Common myeloid progenitor, CD34-positive (primary cell): ENCODE measurements at regions of chr1 and their contacts with region 1.

Region 1: DNA sequence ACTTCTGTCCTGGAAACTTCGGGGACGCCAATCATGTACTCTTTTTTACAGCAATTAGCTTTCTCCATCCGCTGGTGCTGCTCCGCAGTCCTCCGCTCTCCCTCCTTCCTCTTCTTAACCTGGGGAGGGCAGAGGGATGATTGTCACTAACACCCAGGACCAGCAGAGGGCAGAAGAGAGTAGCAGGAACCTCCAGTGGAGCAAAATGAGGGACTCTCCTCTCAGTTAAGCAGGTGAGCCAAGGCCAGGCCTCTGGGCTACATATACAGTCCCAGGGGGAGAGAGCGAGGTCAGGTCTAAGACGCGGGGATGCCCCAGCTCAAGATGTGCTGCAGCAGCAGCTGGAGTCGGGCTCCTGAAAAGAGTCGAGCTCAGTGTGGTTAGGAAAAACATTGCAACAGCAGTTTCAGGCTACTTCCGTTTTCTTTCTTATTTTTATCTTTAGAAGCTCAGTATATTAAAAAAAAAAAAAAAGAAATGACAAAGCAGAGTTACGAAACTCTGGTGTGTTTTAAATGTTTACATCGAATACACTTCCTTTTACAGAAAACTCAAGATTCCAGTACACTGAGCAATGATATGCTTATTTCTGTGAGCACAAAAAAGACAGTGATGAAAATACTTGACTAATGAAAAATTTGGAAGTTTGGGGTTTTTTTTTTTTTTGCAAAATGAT is 25.7 kb upstream of the NLRP3 start:
- DNase-seq: peak; percentile 97 to 100 (median 99)
- H3K4me3 ChIP-seq: peak overlapping the region in 6 of 7 experiments; percentile 1 to 64 (median 34)
- H3K27ac ChIP-seq: peak overlapping the region; percentile 50 to 77
- H3K4me1 ChIP-seq: peaks cover 8 to 49% (median 43%) of the 10 kb centered on the region in 4 experiments
- H3K27me3 ChIP-seq: no peaks in the 10 kb centered on the region

Region 2: GRCh38 chr1:247360991-247361731 is 29.1 kb before region 1 on chr1:
- CTCF ChIA-PET with region 1: no interaction called
- POLR2A ChIA-PET with region 1: no interaction called
- DNase-seq: peak in 2 of 3 donors; percentile 10 to 42
- H3K4me3 ChIP-seq: peak overlapping the region in 1 of 7 experiments; percentile 36
- H3K27ac ChIP-seq: no peak overlapping the region
- H3K4me1 ChIP-seq: peaks cover 3 to 11% (median 6%) of the 10 kb centered on the region in 4 experiments
- H3K27me3 ChIP-seq: no peaks in the 10 kb centered on the region

Region 3: GRCh38 chr1:247401310-247402119 is 11.3 kb after region 1 on chr1:
- CTCF ChIA-PET with region 1: interaction called, 10 read pairs
- POLR2A ChIA-PET with region 1: no interaction called
- DNase-seq: no peak
- H3K4me3 ChIP-seq: no peak overlapping the region
- H3K27ac ChIP-seq: no peak overlapping the region
- H3K4me1 ChIP-seq: peaks cover 0 to 7% (median 5%) of the 10 kb centered on the region in 4 experiments
- H3K27me3 ChIP-seq: no peaks in the 10 kb centered on the region

Region 4: DNA sequence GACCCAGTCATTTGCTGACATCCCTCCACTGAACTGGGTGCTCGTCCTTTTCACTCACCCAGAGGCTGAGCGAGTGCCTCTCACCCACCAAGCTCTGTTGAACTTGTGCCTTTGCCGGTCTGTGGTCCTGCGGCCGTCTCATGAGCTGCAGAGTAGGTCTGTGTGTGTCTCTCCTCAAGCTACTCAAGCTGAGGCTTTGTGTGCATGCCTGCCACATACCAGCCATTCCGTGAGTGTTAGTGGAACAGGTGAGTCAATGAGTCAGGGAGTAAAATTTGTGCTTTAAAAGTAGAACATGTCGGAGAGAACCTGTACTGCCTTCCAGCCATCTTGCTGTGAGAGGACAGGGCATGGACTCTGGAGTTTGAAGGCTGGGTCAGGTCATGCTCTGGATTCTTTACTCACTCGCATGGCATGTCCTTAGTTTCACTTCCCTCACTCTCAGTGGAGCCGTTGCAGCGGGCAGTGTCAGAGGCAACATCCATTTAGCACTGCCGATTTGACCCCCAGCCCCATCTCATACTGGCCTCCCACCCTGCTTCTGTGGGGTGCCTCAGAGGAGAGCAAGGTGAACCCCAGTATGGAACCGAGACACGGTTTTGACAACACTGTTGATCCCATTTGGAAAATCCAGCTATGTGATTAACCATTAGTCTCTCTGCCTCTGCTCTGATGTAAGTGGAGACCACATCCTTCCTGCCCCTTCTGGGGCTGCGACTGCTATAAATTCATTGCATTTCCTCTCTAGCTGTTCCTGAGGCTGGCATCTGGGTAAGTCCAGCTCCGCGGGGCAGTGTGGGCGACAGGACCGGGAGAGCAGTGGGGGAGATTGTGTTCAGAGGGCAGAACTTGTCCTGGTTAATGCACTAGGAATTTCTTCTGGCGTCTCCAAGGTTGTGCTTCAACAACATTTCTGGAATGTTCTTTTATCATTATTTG is 25.4 kb after region 1 on chr1 and contains the start of gene NLRP3:
- CTCF ChIA-PET with region 1: interaction called, 47 read pairs
- POLR2A ChIA-PET with region 1: interaction called, 21 read pairs
- DNase-seq: peak; percentile 85 to 93 (median 90)
- H3K4me3 ChIP-seq: peak within 1 kb of the TSS; percentile 55 to 92 (median 78)
- H3K27ac ChIP-seq: peak within 1 kb of the TSS; percentile 71 to 73
- H3K4me1 ChIP-seq: peaks cover 25 to 62% (median 56%) of the 10 kb centered on the region in 4 experiments
- H3K27me3 ChIP-seq: no peaks in the 10 kb centered on the region

Region 5: GRCh38 chr1:247431643-247432042 is 41.4 kb after region 1 on chr1:
- CTCF ChIA-PET with region 1: interaction called, 13 read pairs
- POLR2A ChIA-PET with region 1: interaction called, 8 read pairs
- DNase-seq: peak in 2 of 3 donors; percentile 36 to 37
- H3K4me3 ChIP-seq: no peak overlapping the region
- H3K27ac ChIP-seq: no peak overlapping the region
- H3K4me1 ChIP-seq: peaks cover 0 to 7% (median 0%) of the 10 kb centered on the region in 4 experiments
- H3K27me3 ChIP-seq: no peaks in the 10 kb centered on the region

Region 6: GRCh38 chr1:247456914-247457639 is 66.8 kb after region 1 on chr1:
- CTCF ChIA-PET with region 1: interaction called, 11 read pairs
- POLR2A ChIA-PET with region 1: interaction called, 4 read pairs
- DNase-seq: peak; percentile 7 to 80 (median 72)
- H3K4me3 ChIP-seq: no peak overlapping the region
- H3K27ac ChIP-seq: no peak overlapping the region
- H3K4me1 ChIP-seq: peaks cover 0 to 29% (median 15%) of the 10 kb centered on the region in 4 experiments
- H3K27me3 ChIP-seq: no peaks in the 10 kb centered on the region

Region 7: GRCh38 chr1:247576495-247576894 is 186.2 kb after region 1 on chr1:
- CTCF ChIA-PET with region 1: interaction called, 10 read pairs
- POLR2A ChIA-PET with region 1: no interaction called
- DNase-seq: peak; percentile 43 to 65 (median 52)
- H3K4me3 ChIP-seq: no peak overlapping the region
- H3K27ac ChIP-seq: no peak overlapping the region
- H3K4me1 ChIP-seq: peaks cover 0 to 2% (median 0%) of the 10 kb centered on the region in 4 experiments
- H3K27me3 ChIP-seq: no peaks in the 10 kb centered on the region